Activated B cell treated with CpG ODN at 0.5 μM for 24 hours (primary cell): ENCODE measurements at regions of chr6 and their contacts with region 1.

Region 1: GRCh38 chr6:151451950-151452749 is at the start of gene RMND1:
- DNase-seq: peak; percentile 96
- ATAC-seq: peak; percentile 96
- H3K4me3 Mint-ChIP-seq: peak within 1 kb of the TSS; percentile 97
- H3K27ac Mint-ChIP-seq: peak within 1 kb of the TSS; percentile 91
- H3K4me1 Mint-ChIP-seq: peaks cover 28% of the 10 kb centered on the region
- H3K27me3 Mint-ChIP-seq: no peaks in the 10 kb centered on the region
- CTCF ChIP-seq: no peak
- total RNA-seq, gene RMND1: 12.4 and 17.1 TPM in 2 replicates

Region 2: GRCh38 chr6:150865406-150866146 is 586.6 kb before region 1 on chr6 and contains the start of gene MTHFD1L:
- CTCF ChIA-PET with region 1: no interaction called
- POLR2A ChIA-PET with region 1: interaction called, 3 read pairs
- intact Hi-C with region 1: loop called (anchors 1 kb)
- DNase-seq: peak; percentile 78
- ATAC-seq: peak; percentile 77
- H3K4me3 Mint-ChIP-seq: peak within 1 kb of the TSS; percentile 90
- H3K27ac Mint-ChIP-seq: peak within 1 kb of the TSS; percentile 79
- H3K4me1 Mint-ChIP-seq: peaks cover 23% of the 10 kb centered on the region
- H3K27me3 Mint-ChIP-seq: peaks cover 2% of the 10 kb centered on the region
- CTCF ChIP-seq: no peak
- total RNA-seq, gene MTHFD1L: 56.4 and 60.4 TPM in 2 replicates

Region 3: GRCh38 chr6:151440930-151441329 is 11.2 kb before region 1 on chr6:
- CTCF ChIA-PET with region 1: no interaction called
- POLR2A ChIA-PET with region 1: interaction called, 12 read pairs
- intact Hi-C with region 1: no loop called
- DNase-seq: no peak
- ATAC-seq: no peak
- H3K4me3 Mint-ChIP-seq: no peak overlapping the region
- H3K27ac Mint-ChIP-seq: no peak overlapping the region
- H3K4me1 Mint-ChIP-seq: peaks cover 20% of the 10 kb centered on the region
- H3K27me3 Mint-ChIP-seq: no peaks in the 10 kb centered on the region
- CTCF ChIP-seq: no peak

Region 4: GRCh38 chr6:151576633-151577032 is 124.5 kb after region 1 on chr6:
- CTCF ChIA-PET with region 1: no interaction called
- POLR2A ChIA-PET with region 1: no interaction called
- intact Hi-C with region 1: no loop called
- DNase-seq: no peak
- ATAC-seq: no peak
- H3K4me3 Mint-ChIP-seq: no peak overlapping the region
- H3K27ac Mint-ChIP-seq: no peak overlapping the region
- H3K4me1 Mint-ChIP-seq: peaks cover 4% of the 10 kb centered on the region
- H3K27me3 Mint-ChIP-seq: peaks cover 8% of the 10 kb centered on the region
- CTCF ChIP-seq: no peak

Region 5: DNA sequence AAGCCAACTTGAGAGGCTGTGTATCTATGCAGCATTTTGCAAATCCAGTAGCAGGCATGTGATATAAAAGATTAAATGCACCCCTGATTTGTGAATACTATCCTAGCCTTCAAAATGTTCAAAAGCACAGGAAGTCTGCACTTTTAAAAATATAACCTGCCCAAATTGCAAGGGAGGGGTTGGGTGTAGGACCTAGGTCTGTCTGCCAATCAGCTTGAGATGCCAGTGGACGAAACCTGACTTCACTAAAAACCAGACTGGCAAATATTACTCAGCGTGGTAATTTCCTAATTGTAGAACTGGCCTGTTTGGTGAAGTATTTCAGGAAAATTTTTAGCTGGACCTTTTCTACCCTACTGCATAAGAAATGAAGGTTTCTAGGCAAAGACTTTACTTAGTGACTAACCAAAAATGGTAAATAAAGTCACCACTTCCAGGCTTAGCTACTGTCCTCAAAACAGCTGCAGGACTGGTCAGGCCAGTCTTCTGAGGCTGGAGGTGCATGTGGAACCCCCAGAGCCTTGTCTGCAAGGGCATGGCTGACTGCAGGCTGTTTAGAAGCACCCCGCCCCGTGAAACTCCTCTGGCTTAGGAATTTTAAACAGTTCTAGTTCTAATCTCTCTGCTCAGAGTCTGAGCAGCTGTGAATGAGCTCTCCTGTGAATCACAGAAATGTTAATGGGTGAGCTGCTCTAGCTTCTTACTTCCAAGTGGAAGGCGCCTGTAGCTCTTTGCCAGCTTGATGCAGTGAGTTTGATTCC is 250.9 kb after region 1 on chr6:
- CTCF ChIA-PET with region 1: no interaction called
- POLR2A ChIA-PET with region 1: no interaction called
- intact Hi-C with region 1: loop called (anchors 5 kb)
- DNase-seq: no peak
- ATAC-seq: peak; percentile 49
- H3K4me3 Mint-ChIP-seq: peak overlapping the region; percentile 60
- H3K27ac Mint-ChIP-seq: peak overlapping the region; percentile 82
- H3K4me1 Mint-ChIP-seq: peaks cover 46% of the 10 kb centered on the region
- H3K27me3 Mint-ChIP-seq: no peaks in the 10 kb centered on the region
- CTCF ChIP-seq: no peak

Region 6: DNA sequence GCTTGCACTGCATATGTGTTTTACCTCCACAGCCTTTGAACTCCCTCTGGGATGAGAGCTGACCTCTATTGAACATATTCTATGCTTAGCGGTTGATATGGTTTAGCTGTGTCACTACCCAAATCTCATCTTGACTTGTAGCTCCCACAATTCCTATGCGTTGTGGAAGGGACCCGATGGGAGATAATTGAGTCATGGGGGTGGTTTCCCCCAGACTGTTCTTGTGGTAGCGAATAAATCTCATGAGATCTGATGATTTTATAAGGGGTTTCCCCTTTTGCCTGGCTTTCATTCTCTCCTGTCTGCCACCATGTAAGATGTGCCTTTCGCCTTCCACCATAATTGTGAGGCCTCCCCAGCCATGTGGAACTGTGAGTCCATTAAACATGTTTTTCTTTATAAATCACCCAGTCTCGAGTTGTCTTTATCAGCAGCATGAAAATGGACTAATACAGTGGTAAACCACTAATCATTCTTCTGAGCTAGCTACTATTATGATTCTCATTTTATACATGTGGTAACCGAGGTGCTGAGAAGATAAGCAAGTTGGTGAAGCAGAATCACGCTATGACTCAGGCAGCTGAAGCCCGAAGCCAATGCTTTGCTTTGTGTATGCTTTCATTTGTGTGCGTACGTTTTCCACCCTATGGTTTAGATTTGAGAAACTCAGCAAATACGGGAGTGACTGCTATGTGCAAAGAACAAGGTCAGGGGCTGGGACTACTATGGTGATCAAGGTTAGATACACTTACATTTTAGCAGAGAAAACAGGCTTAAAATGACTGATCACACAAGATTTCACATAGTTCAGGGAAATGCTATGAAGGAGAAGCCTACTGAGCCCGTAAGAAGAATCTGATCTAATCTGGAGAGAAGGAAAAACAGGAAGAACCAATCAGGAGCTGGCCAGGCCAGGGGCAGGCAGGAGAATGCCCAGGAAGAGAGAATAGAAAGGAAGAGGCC is 718.8 kb after region 1 on chr6:
- CTCF ChIA-PET with region 1: no interaction called
- POLR2A ChIA-PET with region 1: no interaction called
- intact Hi-C with region 1: loop called (anchors 5 kb)
- DNase-seq: no peak
- ATAC-seq: peak; percentile 81
- H3K4me3 Mint-ChIP-seq: peak overlapping the region; percentile 61
- H3K27ac Mint-ChIP-seq: peak overlapping the region; percentile 93
- H3K4me1 Mint-ChIP-seq: peaks cover 38% of the 10 kb centered on the region
- H3K27me3 Mint-ChIP-seq: no peaks in the 10 kb centered on the region
- CTCF ChIP-seq: no peak

Region 7: GRCh38 chr6:152982768-152983636 is 1530.9 kb after region 1 on chr6 and contains the start of gene FBXO5:
- CTCF ChIA-PET with region 1: no interaction called
- POLR2A ChIA-PET with region 1: no interaction called
- intact Hi-C with region 1: loop called (anchors 2 kb)
- DNase-seq: peak; percentile 95
- ATAC-seq: peak; percentile 92
- H3K4me3 Mint-ChIP-seq: peak within 1 kb of the TSS; percentile 100
- H3K27ac Mint-ChIP-seq: peak within 1 kb of the TSS; percentile 100
- H3K4me1 Mint-ChIP-seq: peaks cover 41% of the 10 kb centered on the region
- H3K27me3 Mint-ChIP-seq: no peaks in the 10 kb centered on the region
- CTCF ChIP-seq: no peak
- total RNA-seq, gene FBXO5: 11.9 and 13.3 TPM in 2 replicates